Aorta (tissue), 5 donors: ENCODE measurements at regions of chr19 and their contacts with region 1.

Region 1: GRCh38 chr19:5057861-5058260 is 88.9 kb downstream of the KDM4B start:
- DNase-seq: no peak
- ATAC-seq: peak; percentile 19
- H3K4me3 ChIP-seq: no peak overlapping the region
- H3K27ac ChIP-seq: no peak overlapping the region
- H3K4me1 ChIP-seq: no peaks in the 10 kb centered on the region
- H3K27me3 ChIP-seq: no peaks in the 10 kb centered on the region

Region 2: GRCh38 chr19:3801412-3802096 is 1256.3 kb before region 1 on chr19:
- intact Hi-C with region 1: no loop called
- DNase-seq: no peak
- ATAC-seq: no peak
- H3K4me3 ChIP-seq: no peak overlapping the region
- H3K27ac ChIP-seq: no peak overlapping the region
- H3K4me1 ChIP-seq: no peaks in the 10 kb centered on the region
- H3K27me3 ChIP-seq: peaks cover 0 to 2% of the 10 kb centered on the region in 2 donors

Region 3: GRCh38 chr19:5154129-5154798 is 96.4 kb after region 1 on chr19:
- intact Hi-C with region 1: loop called in 1 of 2 experiments (anchors 10 kb)
- DNase-seq: peak in 1 of 2 donors; percentile 79
- ATAC-seq: no peak
- H3K4me3 ChIP-seq: no peak overlapping the region
- H3K27ac ChIP-seq: no peak overlapping the region
- H3K4me1 ChIP-seq: no peaks in the 10 kb centered on the region
- H3K27me3 ChIP-seq: no peaks in the 10 kb centered on the region